HEK293 (cell line): ENCODE measurements at regions of chr4 and their contacts with region 1.

Region 1: DNA sequence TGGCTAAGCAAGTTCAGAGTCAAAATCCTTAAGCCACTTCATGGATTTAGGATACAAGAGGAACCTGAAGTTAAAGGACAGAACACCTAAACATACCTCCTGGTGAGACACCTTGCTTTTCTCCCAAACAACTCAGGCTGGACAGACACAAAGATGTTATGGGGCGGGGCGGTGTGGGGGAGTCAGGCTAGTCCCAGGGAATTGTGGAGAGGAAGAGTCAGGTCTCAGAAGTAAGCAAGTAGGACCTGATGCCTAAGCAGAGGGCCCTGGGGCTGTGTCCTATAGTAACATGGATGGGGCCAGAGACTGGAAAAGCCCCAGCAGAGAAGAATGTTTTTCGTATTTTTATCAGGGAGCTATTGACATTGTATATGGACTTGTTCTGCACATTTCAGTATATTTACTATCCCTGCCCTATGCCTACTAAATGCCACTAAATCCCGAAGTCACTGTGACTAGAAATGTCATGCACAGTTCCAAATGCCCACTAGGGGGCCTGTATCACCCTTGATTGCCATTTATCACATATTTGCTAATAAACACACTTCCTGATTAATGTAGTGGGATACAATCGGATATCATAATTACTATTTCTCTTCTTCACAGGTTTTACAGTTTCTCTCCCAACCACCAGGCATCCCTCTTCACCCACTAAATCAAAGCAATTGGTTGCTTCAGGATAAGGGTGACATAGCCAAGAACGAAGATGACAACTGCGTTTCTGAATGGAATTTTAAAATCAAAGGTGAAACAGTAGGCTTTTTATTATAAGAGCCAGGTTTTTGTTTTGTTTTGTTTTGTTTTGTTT is 23.8 kb upstream of the ARHGAP10 start:
- H3K4me3 ChIP-seq: no peak overlapping the region
- H3K27ac ChIP-seq: no peak overlapping the region
- H3K4me1 ChIP-seq: no peaks in the 10 kb centered on the region
- CTCF ChIP-seq: 0 out of 2 replicates have a peak, but pooled peaks have one; percentile 8

Region 2: DNA sequence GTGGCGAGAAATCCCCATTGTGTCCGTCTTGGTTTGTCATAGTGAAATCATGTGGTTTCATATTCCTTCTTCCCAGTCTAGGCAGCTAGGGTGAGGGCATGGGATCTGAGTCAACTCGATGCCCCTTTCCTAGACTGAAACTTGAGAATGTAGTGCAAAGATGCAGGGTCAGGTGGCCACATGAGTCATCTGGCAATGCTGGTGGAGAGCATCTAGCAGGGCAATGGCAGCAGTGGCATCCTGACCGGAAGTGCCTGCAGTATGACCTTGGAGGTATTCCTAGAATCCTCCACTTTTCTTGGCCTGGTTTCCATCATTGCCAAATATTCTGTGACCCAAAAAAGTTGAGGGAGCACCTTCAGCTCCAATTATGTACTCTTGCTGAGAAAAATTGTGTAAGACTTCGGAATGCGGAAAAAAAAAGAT is 130.0 kb before region 1 on chr4:
- CTCF ChIA-PET with region 1: no interaction called
- POLR2A ChIA-PET with region 1: no interaction called
- H3K4me3 ChIP-seq: no peak overlapping the region
- H3K27ac ChIP-seq: no peak overlapping the region
- H3K4me1 ChIP-seq: no peaks in the 10 kb centered on the region
- CTCF ChIP-seq: no peak

Region 3: GRCh38 chr4:147693218-147693617 is 14.9 kb before region 1 on chr4:
- CTCF ChIA-PET with region 1: interaction called, 11 read pairs
- POLR2A ChIA-PET with region 1: no interaction called
- H3K4me3 ChIP-seq: no peak overlapping the region
- H3K27ac ChIP-seq: no peak overlapping the region
- H3K4me1 ChIP-seq: no peaks in the 10 kb centered on the region
- CTCF ChIP-seq: no peak